KBM-7 (cell line): ENCODE measurements at regions of chr1 and their contacts with region 1.

Region 1: GRCh38 chr1:156445789-156446263 is 54.7 kb downstream of the MEF2D start:
- DNase-seq: peak; percentile 94

Region 2: DNA sequence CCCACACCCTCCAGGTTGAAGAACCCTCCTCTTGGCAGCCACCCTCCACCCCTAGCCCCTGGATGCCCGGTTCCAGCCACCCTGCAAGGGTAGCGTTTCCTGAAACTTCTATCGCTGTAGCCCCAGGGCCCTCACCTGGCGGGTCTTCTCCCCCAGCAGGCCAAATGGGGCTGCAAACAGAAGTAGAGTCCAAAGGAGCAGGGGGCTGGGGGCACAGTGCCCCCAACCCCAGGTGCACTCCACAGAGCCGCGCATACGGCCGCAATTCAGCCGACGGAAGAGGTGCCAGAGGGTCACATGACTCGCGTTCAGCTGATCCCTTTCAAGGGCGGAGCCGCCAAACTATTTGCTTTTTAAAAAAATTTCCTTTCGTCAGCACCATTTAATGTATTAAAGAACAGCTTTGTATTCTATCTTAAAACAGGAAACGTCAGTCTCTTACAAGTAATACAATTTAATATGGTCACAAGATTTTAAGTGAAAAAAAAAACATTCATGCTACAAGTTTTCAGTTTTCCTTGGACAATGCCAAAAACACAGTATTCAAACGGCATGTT is 150.4 kb before region 1 on chr1 and contains the start of gene GLMP:
- in situ Hi-C with region 1: no loop called
- DNase-seq: no peak

Region 3: GRCh38 chr1:156383023-156383422 is 62.8 kb before region 1 on chr1:
- in situ Hi-C with region 1: loop called (anchors 10 kb)
- DNase-seq: peak; percentile 58

Region 4: GRCh38 chr1:156705918-156706656 is 260.3 kb after region 1 on chr1:
- in situ Hi-C with region 1: no loop called
- DNase-seq: peak; percentile 83